Dorsolateral prefrontal cortex (tissue), 120 donors: ENCODE measurements at regions of chr18 and their contacts with region 1.

Region 1: GRCh38 chr18:23526511-23527063 is 23.3 kb downstream of the RMC1 start:
- DNase-seq: no peak
- H3K4me3 ChIP-seq: no peak overlapping the region
- H3K27ac ChIP-seq: peak overlapping the region in 3 of 59 donors; percentile 23 to 59 (median 49)
- H3K27me3 ChIP-seq: no peaks in the 10 kb centered on the region
- CTCF ChIP-seq: no peak

Region 2: GRCh38 chr18:23306822-23307221 is 219.8 kb before region 1 on chr18:
- intact Hi-C with region 1: no loop called
- DNase-seq: peak in 2 of 10 donors; percentile 11 to 58
- H3K4me3 ChIP-seq: no peak overlapping the region
- H3K27ac ChIP-seq: no peak overlapping the region
- H3K27me3 ChIP-seq: no peaks in the 10 kb centered on the region
- CTCF ChIP-seq: no peak

Region 3: GRCh38 chr18:23515911-23516546 is 10.6 kb before region 1 on chr18:
- intact Hi-C with region 1: loop called in 1 of 2 experiments (anchors 1 kb)
- DNase-seq: peak; percentile 60 to 87 (median 81)
- H3K4me3 ChIP-seq: peak overlapping the region in 1 of 59 donors; percentile 1
- H3K27ac ChIP-seq: peak overlapping the region in 42 of 59 donors; percentile 6 to 78 (median 48)
- H3K27me3 ChIP-seq: no peaks in the 10 kb centered on the region
- CTCF ChIP-seq: peak; percentile 60 to 93 (median 85)